HepG2 (cell line): ENCODE measurements at regions of chr6 and their contacts with region 1.

Region 1: DNA sequence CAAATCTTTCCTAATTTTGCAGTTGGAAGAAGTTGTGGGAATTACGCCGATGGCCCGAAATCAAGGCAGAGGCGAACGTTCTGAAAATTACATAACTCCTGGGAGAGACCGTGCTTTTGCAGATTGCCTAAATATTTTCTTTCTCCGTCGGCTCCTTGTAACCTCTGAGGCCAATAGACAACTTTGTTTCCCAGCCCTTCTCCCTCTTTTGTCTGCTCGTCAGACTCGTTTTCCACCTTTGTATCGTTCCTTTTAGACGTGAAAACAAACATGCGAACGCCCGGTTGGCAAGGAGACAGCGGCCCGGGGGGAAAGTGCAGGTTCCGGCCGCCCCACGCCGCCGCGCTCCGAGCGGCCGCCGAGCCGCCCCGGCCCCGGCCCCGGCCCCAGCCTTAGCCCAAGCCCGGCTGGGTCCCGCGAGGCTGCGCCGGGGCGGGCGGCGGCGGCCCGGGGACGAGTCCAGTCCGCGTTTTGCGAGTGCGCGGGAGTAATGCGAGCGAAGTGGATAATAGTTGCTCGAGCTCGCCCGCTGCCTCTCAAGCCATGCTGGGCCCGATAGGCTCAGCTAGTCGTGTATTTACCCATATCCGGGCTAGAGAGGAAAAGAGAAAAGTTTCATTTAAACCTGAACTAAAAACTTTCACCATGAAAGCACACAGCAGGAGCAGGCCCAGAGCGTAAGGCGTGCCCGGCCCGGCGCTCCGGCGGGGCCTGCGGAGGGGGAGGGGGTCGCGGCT is at the start of gene ARID1B:
- DNase-seq: peak; percentile 70
- ATAC-seq: peak; percentile 77
- H3K4me3 ChIP-seq: peak within 1 kb of the TSS; percentile 72 to 95 (median 93)
- H3K27ac ChIP-seq: peak within 1 kb of the TSS; percentile 99
- H3K4me1 ChIP-seq: peaks cover 20% of the 10 kb centered on the region
- H3K27me3 ChIP-seq: no peaks in the 10 kb centered on the region; a peak in 1 of 5 replicates
- CTCF ChIP-seq: no peak
- EP300 ChIP-seq: 0 out of 4 replicates have a peak, but pooled peaks of 1 of the 2 experiments have one; percentile 3
- POLR2A ChIP-seq: peak; percentile 68 to 89
- RAD21 ChIP-seq: peak; percentile 57
- total RNA-seq, gene ARID1B: 32.6 and 38.0 TPM in 2 replicates

Region 2: DNA sequence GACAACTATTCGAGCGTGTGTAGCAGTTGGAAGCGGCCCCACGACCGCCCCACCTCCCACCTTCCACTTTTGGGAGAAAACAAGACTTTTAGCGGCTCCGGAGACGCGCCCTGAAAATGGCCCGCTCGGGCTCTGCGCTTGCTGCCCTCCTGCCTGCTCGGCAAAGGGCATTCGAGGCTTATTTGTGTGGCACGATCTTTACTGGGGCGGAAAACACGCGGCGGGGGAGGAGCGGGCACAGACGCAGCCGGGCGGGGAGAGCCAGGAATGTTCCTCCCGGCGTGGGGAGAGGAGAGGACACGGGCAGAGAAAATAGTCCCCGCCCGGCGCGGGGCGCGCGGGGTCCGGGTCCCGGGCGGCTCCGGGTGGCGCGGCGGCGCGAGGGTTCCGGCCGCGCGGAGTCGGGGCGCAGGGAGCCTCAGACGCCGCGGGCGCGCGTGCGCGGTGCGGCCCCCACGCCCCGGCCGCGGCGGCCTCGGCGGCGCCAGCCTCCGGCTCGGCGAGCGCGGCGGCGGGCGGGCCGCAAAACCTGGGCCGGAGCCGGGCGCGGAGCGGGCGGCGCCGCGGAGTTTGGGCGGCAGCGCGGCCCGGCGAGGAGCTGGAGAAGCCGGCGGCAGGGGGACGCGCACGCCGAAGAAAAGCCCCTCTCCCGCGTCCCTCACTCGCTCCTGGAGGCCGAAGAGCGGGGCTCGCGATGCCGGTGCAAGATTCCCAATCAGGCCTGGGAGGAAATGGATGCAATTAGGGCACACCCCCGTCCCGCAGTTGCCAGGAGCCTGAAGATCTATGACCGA is 89.8 kb before region 1 on chr6:
- CTCF ChIA-PET with region 1: no interaction called
- POLR2A ChIA-PET with region 1: interaction called, 10 read pairs
- in situ Hi-C with region 1: loop called (anchors 5 kb)
- intact Hi-C with region 1: loop called (anchors 1 kb)
- DNase-seq: peak; percentile 40
- ATAC-seq: peak; percentile 91
- H3K4me3 ChIP-seq: peak overlapping the region; percentile 81 to 93 (median 86)
- H3K27ac ChIP-seq: peak overlapping the region; percentile 81
- H3K4me1 ChIP-seq: peaks cover 18% of the 10 kb centered on the region
- H3K27me3 ChIP-seq: peaks cover 0 to 33% of the 10 kb centered on the region in 2 experiments; a peak in 3 of 5 replicates
- CTCF ChIP-seq: 0 out of 2 replicates have a peak, but pooled peaks have one; percentile 3
- EP300 ChIP-seq: no peak
- POLR2A ChIP-seq: peak; percentile 64 to 84
- RAD21 ChIP-seq: peak; percentile 5

Region 3: GRCh38 chr6:156719720-156720563 is 57.1 kb before region 1 on chr6:
- CTCF ChIA-PET with region 1: no interaction called
- POLR2A ChIA-PET with region 1: interaction called, 7 read pairs
- in situ Hi-C with region 1: no loop called
- intact Hi-C with region 1: loop called (anchors 2 kb)
- DNase-seq: peak; percentile 91
- ATAC-seq: peak; percentile 95
- H3K4me3 ChIP-seq: peak overlapping the region; percentile 54 to 75 (median 59)
- H3K27ac ChIP-seq: peak overlapping the region; percentile 23
- H3K4me1 ChIP-seq: peaks cover 32% of the 10 kb centered on the region
- H3K27me3 ChIP-seq: peaks cover 0 to 4% of the 10 kb centered on the region in 2 experiments; a peak in 4 of 5 replicates
- CTCF ChIP-seq: no peak; the same call in 1 of the 2 replicates
- EP300 ChIP-seq: peak in 1 of 2 experiments; percentile 70; a peak in 3 of 4 replicates
- POLR2A ChIP-seq: peak; percentile 44 to 51; a peak in 1 of 4 replicates
- RAD21 ChIP-seq: peak; percentile 61

Region 4: GRCh38 chr6:156933201-156934068 is 156.4 kb after region 1 on chr6:
- CTCF ChIA-PET with region 1: no interaction called
- POLR2A ChIA-PET with region 1: interaction called, 4 read pairs
- in situ Hi-C with region 1: no loop called
- intact Hi-C with region 1: loop called (anchors 1 kb)
- DNase-seq: peak; percentile 93
- ATAC-seq: peak; percentile 99
- H3K4me3 ChIP-seq: peak overlapping the region in 2 of 3 experiments; percentile 30 to 31; a peak in 2 of 6 replicates
- H3K27ac ChIP-seq: peak overlapping the region; percentile 81
- H3K4me1 ChIP-seq: peaks cover 38% of the 10 kb centered on the region
- H3K27me3 ChIP-seq: no peaks in the 10 kb centered on the region
- CTCF ChIP-seq: peak; percentile 60
- EP300 ChIP-seq: peak in 1 of 2 experiments; percentile 59; a peak in 2 of 4 replicates
- POLR2A ChIP-seq: 0 out of 4 replicates have a peak, but pooled peaks of 1 of the 2 experiments have one; percentile 20
- RAD21 ChIP-seq: 0 out of 2 replicates have a peak, but pooled peaks have one; percentile 19

Region 5: DNA sequence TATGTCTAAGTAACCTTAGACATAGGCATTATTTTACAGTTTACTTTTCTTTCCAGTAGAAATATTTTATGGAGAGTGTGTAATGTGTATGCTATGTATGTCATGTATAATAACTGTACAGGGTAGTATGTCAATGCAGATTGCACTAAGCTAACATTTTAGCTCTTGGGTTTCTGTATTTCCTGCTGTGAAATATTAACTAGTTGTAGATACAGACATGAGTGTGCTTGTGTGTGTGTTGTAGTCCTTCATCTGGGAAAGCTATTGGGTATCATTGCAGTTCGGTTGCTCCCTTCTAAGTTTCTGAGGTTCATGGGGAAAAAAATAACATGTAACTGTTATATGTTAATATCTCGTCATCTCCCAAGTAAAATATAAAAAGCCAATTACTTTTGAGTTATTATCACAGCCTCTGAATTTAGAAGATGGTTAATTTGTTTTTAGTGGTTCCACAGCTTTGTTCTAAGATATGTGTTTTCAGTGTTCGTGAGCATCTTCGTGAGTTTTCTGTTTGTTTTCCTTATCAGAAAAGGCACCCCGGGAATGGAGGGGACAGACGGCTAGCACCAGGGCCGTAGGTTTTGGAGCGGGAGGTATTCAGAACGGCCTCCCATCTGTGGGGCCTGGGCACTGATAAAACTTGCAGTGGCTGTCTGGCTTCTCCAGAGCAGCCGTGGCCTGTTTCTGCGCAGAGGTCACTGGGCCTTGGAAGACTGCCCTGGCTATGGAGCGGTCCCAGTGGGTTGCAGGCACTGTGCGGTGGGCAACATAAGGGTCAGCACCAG is 215.2 kb after region 1 on chr6:
- CTCF ChIA-PET with region 1: no interaction called
- POLR2A ChIA-PET with region 1: no interaction called
- in situ Hi-C with region 1: no loop called
- intact Hi-C with region 1: loop called (anchors 5 kb)
- DNase-seq: peak; percentile 83
- ATAC-seq: peak; percentile 95
- H3K4me3 ChIP-seq: peak overlapping the region; percentile 1 to 49 (median 44); a peak in 3 of 6 replicates
- H3K27ac ChIP-seq: peak overlapping the region; percentile 44
- H3K4me1 ChIP-seq: peaks cover 48% of the 10 kb centered on the region
- H3K27me3 ChIP-seq: no peaks in the 10 kb centered on the region
- CTCF ChIP-seq: no peak
- EP300 ChIP-seq: no peak
- POLR2A ChIP-seq: no peak
- RAD21 ChIP-seq: no peak

Region 6: GRCh38 chr6:157021344-157021992 is 244.5 kb after region 1 on chr6:
- CTCF ChIA-PET with region 1: no interaction called
- POLR2A ChIA-PET with region 1: interaction called, 5 read pairs
- in situ Hi-C with region 1: no loop called
- intact Hi-C with region 1: loop called (anchors 2 kb)
- DNase-seq: peak; percentile 91
- ATAC-seq: peak; percentile 94
- H3K4me3 ChIP-seq: peak overlapping the region; percentile 89 to 98 (median 92)
- H3K27ac ChIP-seq: peak overlapping the region; percentile 98
- H3K4me1 ChIP-seq: peaks cover 28% of the 10 kb centered on the region
- H3K27me3 ChIP-seq: no peaks in the 10 kb centered on the region; a peak in 1 of 5 replicates
- CTCF ChIP-seq: peak; percentile 72
- EP300 ChIP-seq: peak in 1 of 2 experiments; percentile 25; a peak in 1 of 4 replicates
- POLR2A ChIP-seq: peak; percentile 96 to 99
- RAD21 ChIP-seq: peak; percentile 82